Astrocyte of the cerebellum (primary cell): ENCODE measurements at regions of chr12 and their contacts with region 1.

Region 1: GRCh38 chr12:41120211-41120610 is 67.9 kb upstream of the PDZRN4 start:
- DNase-seq: peak; percentile 34
- H3K4me3 ChIP-seq: no peak overlapping the region
- CTCF ChIP-seq: no peak

Region 2: GRCh38 chr12:40794094-40794486 is 326.1 kb before region 1 on chr12:
- in situ Hi-C with region 1: no loop called
- DNase-seq: no peak
- H3K4me3 ChIP-seq: no peak overlapping the region
- CTCF ChIP-seq: no peak

Region 3: DNA sequence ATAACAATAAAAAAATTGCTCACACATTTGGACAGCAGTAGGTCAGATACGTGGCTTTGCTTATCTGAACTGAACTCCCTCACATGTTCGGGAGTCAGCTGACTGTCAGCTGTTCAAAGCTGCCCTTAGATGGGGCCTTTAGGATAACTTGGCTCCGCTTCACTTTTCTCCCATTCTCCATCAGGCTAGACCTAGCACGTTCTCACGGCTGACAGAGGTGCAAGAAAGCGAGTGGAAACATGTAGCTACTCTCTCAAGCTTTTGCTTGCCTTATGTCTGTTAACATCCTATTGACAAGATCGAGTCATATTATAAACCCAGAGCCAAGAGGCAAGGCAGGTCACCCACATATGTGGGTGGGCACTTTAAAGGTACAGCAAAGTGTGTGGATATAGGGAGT is 44.1 kb before region 1 on chr12:
- in situ Hi-C with region 1: loop called (anchors 5 kb)
- DNase-seq: no peak
- H3K4me3 ChIP-seq: no peak overlapping the region
- CTCF ChIP-seq: no peak

Region 4: DNA sequence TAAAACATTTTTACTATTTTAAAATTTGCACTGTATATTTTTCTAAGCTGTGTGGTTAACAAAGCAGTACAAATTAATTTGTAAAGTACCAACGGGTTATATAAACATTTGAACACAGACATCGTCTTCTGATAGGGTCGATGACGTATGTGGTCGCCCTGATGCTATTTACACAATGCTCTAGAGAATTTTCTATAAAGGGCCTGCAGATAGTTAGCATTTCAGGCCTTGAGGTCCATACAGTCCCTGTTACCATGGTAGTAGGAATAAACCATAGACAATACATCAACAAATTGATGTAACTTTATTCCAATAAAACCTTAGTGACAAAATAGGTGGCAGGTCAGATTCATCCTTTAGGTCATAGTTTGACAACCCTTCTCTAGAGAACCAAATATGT is 42.2 kb after region 1 on chr12:
- in situ Hi-C with region 1: no loop called
- DNase-seq: no peak
- H3K4me3 ChIP-seq: no peak overlapping the region
- CTCF ChIP-seq: no peak

Region 5: GRCh38 chr12:41213107-41213506 is 92.9 kb after region 1 on chr12:
- in situ Hi-C with region 1: no loop called
- DNase-seq: no peak
- H3K4me3 ChIP-seq: no peak overlapping the region
- CTCF ChIP-seq: no peak